B cell (primary cell): ENCODE measurements at regions of chr6 and their contacts with region 1.

Region 1: GRCh38 chr6:47631269-47631772 is 67.1 kb upstream of the ADGRF4 start:
- DNase-seq: peak; percentile 59
- ATAC-seq: no peak
- H3K4me3 ChIP-seq: no peak overlapping the region
- H3K4me3 Mint-ChIP-seq: no peak overlapping the region
- H3K27ac ChIP-seq: no peak overlapping the region
- H3K27ac Mint-ChIP-seq: no peak overlapping the region
- H3K4me1 ChIP-seq: no peaks in the 10 kb centered on the region
- H3K4me1 Mint-ChIP-seq: no peaks in the 10 kb centered on the region
- H3K27me3 ChIP-seq: no peaks in the 10 kb centered on the region
- H3K27me3 Mint-ChIP-seq: no peaks in the 10 kb centered on the region
- CTCF ChIP-seq: peak; percentile 75

Region 2: GRCh38 chr6:47407348-47408281 is 223.7 kb before region 1 on chr6:
- CTCF ChIA-PET with region 1: interaction called, 16 read pairs
- POLR2A ChIA-PET with region 1: no interaction called
- intact Hi-C with region 1: no loop called
- DNase-seq: no peak
- ATAC-seq: no peak
- H3K4me3 ChIP-seq: no peak overlapping the region
- H3K4me3 Mint-ChIP-seq: no peak overlapping the region
- H3K27ac ChIP-seq: no peak overlapping the region
- H3K27ac Mint-ChIP-seq: no peak overlapping the region
- H3K4me1 ChIP-seq: peaks cover 5 to 6% of the 10 kb centered on the region in 2 donors
- H3K4me1 Mint-ChIP-seq: peaks cover 16% of the 10 kb centered on the region
- H3K27me3 ChIP-seq: no peaks in the 10 kb centered on the region
- H3K27me3 Mint-ChIP-seq: peaks cover 7% of the 10 kb centered on the region
- CTCF ChIP-seq: no peak

Region 3: GRCh38 chr6:47603995-47604394 is 27.3 kb before region 1 on chr6:
- CTCF ChIA-PET with region 1: no interaction called
- POLR2A ChIA-PET with region 1: no interaction called
- intact Hi-C with region 1: no loop called
- DNase-seq: no peak
- ATAC-seq: no peak
- H3K4me3 ChIP-seq: no peak overlapping the region
- H3K4me3 Mint-ChIP-seq: no peak overlapping the region
- H3K27ac ChIP-seq: no peak overlapping the region
- H3K27ac Mint-ChIP-seq: no peak overlapping the region
- H3K4me1 ChIP-seq: no peaks in the 10 kb centered on the region
- H3K4me1 Mint-ChIP-seq: no peaks in the 10 kb centered on the region
- H3K27me3 ChIP-seq: no peaks in the 10 kb centered on the region
- H3K27me3 Mint-ChIP-seq: no peaks in the 10 kb centered on the region
- CTCF ChIP-seq: no peak

Region 4: GRCh38 chr6:47733879-47734558 is 102.7 kb after region 1 on chr6:
- CTCF ChIA-PET with region 1: interaction called, 14 read pairs
- POLR2A ChIA-PET with region 1: no interaction called
- intact Hi-C with region 1: no loop called
- DNase-seq: peak; percentile 34
- ATAC-seq: no peak
- H3K4me3 ChIP-seq: no peak overlapping the region
- H3K4me3 Mint-ChIP-seq: no peak overlapping the region
- H3K27ac ChIP-seq: no peak overlapping the region
- H3K27ac Mint-ChIP-seq: no peak overlapping the region
- H3K4me1 ChIP-seq: no peaks in the 10 kb centered on the region
- H3K4me1 Mint-ChIP-seq: no peaks in the 10 kb centered on the region
- H3K27me3 ChIP-seq: no peaks in the 10 kb centered on the region
- H3K27me3 Mint-ChIP-seq: peaks cover 8% of the 10 kb centered on the region
- CTCF ChIP-seq: peak; percentile 30

Region 5: DNA sequence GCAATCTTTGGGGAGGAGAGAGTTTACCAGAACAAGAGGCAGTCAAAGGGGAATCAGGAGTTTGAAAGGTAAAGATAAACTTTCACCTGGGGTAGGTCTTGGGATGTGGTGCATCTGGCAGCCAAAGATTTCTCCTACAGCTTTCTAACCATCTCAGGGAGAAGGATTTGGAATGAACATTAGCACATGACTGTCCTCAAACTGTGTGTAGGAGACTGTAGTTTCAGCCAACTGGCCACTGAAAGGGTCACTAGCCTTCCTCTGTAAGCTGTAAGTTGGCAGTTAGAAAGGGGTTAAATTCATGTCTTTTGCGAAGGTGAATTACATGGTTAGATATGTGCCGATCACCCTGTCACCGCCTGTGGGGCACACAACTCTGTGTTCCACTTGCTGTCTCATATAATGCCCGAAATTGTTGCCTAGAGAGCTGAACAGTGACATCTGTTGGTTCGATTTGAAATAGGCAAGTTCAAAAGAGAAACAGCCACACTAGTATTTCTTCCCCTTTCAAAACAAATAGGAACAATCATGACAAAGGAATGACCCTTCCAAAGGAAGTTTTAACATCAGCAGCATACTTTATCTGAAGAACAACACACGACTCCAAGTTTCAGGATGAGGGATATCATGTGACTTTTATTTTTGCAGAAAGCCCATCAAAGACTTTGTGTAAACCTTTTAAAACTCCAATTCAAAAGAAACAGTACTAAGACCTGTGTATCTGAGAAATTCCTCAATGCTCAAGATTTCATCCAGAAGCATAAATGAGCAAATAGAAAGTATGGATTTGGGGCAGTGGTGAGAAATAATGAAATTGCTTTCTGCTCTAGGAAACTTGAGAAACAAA is 149.4 kb after region 1 on chr6:
- CTCF ChIA-PET with region 1: interaction called, 8 read pairs
- POLR2A ChIA-PET with region 1: no interaction called
- intact Hi-C with region 1: loop called (anchors 1 kb)
- DNase-seq: peak; percentile 55
- ATAC-seq: peak; percentile 64
- H3K4me3 ChIP-seq: no peak overlapping the region
- H3K4me3 Mint-ChIP-seq: peak overlapping the region; percentile 6
- H3K27ac ChIP-seq: no peak overlapping the region
- H3K27ac Mint-ChIP-seq: no peak overlapping the region
- H3K4me1 ChIP-seq: peaks cover 3 to 4% of the 10 kb centered on the region in 2 donors
- H3K4me1 Mint-ChIP-seq: peaks cover 8% of the 10 kb centered on the region
- H3K27me3 ChIP-seq: peaks cover 0 to 9% (median 0%) of the 10 kb centered on the region in 4 experiments
- H3K27me3 Mint-ChIP-seq: peaks cover 21% of the 10 kb centered on the region
- CTCF ChIP-seq: peak; percentile 72

Region 6: DNA sequence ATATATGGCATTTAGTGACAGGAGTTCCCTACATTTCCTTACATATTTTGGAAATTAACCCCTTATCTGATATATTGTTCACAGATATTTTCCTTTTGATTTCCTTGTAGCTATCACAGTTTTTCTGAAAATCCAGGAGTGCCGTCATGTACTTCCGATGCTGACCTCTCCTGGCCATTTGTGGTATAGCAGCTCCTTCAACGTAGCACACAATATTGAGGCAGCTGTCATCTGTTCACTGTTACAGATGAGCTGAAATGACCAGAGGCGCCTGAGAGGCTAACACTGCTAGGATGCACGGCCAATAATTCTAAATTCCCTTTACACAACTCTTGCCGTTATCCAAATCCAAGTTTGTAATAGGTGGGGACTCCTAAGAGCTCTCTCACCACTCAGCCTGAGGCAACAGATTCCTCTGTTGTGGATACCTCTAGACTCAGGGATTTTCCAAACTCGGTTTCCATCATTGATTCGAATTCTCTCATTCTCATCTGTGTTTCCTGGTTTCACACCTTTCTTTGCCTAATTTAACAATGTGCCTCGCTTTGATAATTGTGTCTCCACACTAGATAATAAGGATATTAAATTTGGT is 1778.7 kb after region 1 on chr6:
- CTCF ChIA-PET with region 1: interaction called, 11 read pairs
- POLR2A ChIA-PET with region 1: no interaction called
- intact Hi-C with region 1: no loop called
- DNase-seq: peak; percentile 53
- ATAC-seq: peak; percentile 54
- H3K4me3 ChIP-seq: no peak overlapping the region
- H3K4me3 Mint-ChIP-seq: no peak overlapping the region
- H3K27ac ChIP-seq: no peak overlapping the region
- H3K27ac Mint-ChIP-seq: no peak overlapping the region
- H3K4me1 ChIP-seq: no peaks in the 10 kb centered on the region
- H3K4me1 Mint-ChIP-seq: no peaks in the 10 kb centered on the region
- H3K27me3 ChIP-seq: no peaks in the 10 kb centered on the region
- H3K27me3 Mint-ChIP-seq: peaks cover 9% of the 10 kb centered on the region
- CTCF ChIP-seq: peak; percentile 89